PC-3 (cell line): ENCODE measurements at regions of chr11 and their contacts with region 1.

Region 1: GRCh38 chr11:130131961-130132850 is 27.4 kb upstream of the ST14 start:
- DNase-seq: peak; percentile 92
- ATAC-seq: peak; percentile 87
- H3K4me3 ChIP-seq: no peak overlapping the region
- H3K27ac ChIP-seq: no peak overlapping the region
- H3K4me1 ChIP-seq: no peaks in the 10 kb centered on the region
- H3K27me3 ChIP-seq: no peaks in the 10 kb centered on the region
- CTCF ChIP-seq: peak; percentile 95

Region 2: GRCh38 chr11:129785383-129786111 is 346.7 kb before region 1 on chr11:
- CTCF ChIA-PET with region 1: no interaction called
- POLR2A ChIA-PET with region 1: no interaction called
- intact Hi-C with region 1: loop called (anchors 2 kb)
- DNase-seq: peak; percentile 86
- ATAC-seq: peak; percentile 49
- H3K4me3 ChIP-seq: no peak overlapping the region
- H3K27ac ChIP-seq: peak overlapping the region; percentile 45
- H3K4me1 ChIP-seq: peaks cover 34% of the 10 kb centered on the region
- H3K27me3 ChIP-seq: no peaks in the 10 kb centered on the region
- CTCF ChIP-seq: peak; percentile 90

Region 3: DNA sequence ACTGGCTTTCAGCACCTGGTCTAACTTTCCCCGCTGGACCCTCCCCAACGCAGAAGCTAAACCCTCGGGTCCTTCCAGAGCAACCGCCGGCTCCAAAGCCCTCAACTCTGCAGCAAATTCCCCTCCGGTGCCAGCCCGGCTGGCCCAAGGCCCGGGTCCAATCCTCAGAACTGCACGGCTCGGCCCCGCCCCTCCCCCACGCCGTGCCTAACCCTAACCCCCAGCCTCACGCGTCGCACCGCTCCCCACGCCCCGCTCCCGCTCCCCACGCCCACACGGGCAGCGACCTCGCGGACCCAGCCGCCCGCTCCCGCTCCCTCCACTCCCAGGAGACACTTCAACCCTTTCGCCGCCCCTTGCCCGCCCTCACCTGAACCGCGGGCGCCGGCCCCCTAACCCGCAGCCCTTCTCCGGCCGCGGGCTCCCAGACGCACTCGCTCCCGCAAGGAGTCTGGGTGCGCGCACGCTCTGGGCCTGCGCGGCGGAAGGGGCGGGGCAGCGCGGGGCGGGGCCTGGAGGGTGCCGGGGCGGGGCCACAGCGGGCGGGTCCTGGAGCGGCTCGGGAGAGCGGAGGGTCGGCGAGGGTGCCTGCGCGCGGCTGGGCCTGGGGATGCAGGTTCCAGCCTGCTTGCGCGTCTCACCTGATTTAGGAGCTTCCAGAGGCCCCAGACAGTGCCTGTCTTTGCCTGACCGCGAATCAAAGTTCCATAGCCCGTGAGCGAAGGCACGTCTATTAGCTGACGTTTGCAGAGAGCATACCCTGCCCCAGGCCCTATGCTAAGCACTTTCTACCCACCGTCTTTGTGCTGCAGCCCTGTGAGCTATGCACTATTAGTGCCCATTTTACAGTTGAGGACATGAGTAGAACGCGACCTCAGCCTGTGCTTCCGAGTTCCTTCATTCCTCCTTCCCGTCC is 236.8 kb before region 1 on chr11 and contains the start of gene NFRKB:
- CTCF ChIA-PET with region 1: no interaction called
- POLR2A ChIA-PET with region 1: interaction called, 15 read pairs
- intact Hi-C with region 1: no loop called
- DNase-seq: peak; percentile 85
- ATAC-seq: peak; percentile 94
- H3K4me3 ChIP-seq: peak within 1 kb of the TSS; percentile 92
- H3K27ac ChIP-seq: peak within 1 kb of the TSS; percentile 21; the same call in 1 of the 2 replicates
- H3K4me1 ChIP-seq: peaks cover 20% of the 10 kb centered on the region
- H3K27me3 ChIP-seq: no peaks in the 10 kb centered on the region
- CTCF ChIP-seq: no peak
- total RNA-seq, gene NFRKB: 48.2 and 57.0 TPM in 2 replicates

Region 4: DNA sequence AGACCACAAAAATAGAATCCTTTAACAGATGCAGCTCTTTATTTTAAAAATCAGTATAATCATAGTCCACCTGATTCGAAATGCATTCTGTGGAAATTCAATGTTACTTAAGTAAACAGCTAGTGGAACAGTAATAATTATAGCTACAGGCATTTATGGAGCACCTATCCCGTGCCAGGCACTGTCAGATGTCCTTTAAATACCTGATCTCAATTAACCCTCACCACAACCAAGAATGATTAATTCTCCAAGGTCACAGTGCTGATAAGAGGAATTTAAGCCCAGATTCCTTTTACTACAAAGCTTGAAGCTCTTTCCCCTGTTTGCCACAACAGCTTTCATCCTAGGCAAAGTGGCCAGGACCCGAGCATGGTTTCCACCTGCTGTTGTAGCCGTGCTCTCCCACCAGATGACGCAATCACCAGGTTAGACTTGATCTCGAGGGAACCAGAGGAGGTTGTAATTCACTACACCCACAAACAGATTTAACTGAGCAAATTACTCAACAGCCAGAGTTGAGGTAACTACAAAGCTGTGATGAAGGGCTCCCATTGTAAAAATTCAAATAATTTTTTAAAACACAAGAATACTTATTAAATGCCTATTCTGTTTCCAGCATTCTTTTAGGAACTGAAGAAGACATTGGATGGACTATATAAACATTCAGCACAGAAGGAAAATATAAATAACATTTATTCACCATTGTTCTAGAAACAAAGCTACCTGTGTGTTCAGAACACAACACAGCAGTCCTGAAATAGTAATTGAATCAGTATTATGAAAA is 139.9 kb before region 1 on chr11:
- CTCF ChIA-PET with region 1: interaction called, 18 read pairs
- POLR2A ChIA-PET with region 1: no interaction called
- intact Hi-C with region 1: loop called (anchors 1 kb)
- DNase-seq: peak; percentile 53
- ATAC-seq: peak; percentile 68
- H3K4me3 ChIP-seq: no peak overlapping the region
- H3K27ac ChIP-seq: no peak overlapping the region
- H3K4me1 ChIP-seq: no peaks in the 10 kb centered on the region
- H3K27me3 ChIP-seq: no peaks in the 10 kb centered on the region
- CTCF ChIP-seq: peak; percentile 64

Region 5: DNA sequence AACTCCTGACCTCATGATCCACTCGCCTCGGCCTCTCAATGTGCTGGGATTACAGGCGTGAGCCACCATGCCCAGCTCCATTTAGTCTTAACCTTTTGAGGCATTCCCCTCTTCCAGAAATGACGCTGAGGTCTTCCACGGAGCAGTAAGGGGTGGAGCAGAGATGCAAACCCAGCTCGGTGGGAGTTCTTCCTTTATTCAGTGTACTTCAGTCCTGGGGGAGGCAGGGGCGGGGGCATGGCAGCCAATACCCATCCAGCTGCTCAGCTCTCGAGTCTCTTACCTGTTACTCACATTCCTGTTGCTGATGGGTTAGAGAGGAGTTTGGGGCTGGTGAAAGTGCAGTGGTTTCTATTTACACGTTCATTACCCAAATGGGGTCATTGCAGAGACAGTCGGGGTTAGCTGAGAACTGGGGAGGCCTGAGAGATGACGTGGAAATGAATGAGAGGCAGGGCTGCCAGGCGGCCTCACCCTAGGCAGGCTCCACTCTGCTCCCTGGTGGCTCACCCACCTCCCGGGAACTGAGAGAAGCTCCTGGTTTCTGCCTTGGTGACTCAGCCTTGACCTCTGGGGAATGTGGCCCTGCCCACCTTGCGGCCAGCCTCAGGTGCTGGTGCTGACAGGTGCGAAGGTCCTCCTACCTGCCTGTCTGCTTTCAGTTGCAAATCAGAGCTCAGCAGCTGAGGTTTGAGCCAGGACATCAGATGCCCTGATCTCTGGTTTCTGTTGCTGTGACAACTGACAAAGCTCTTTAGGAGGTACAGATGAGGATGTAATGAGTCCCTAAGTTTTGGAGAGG is 14.0 kb after region 1 on chr11:
- CTCF ChIA-PET with region 1: interaction called, 23 read pairs
- POLR2A ChIA-PET with region 1: interaction called, 3 read pairs
- intact Hi-C with region 1: no loop called
- DNase-seq: peak; percentile 99
- ATAC-seq: peak; percentile 97
- H3K4me3 ChIP-seq: no peak overlapping the region
- H3K27ac ChIP-seq: peak overlapping the region; percentile 89
- H3K4me1 ChIP-seq: peaks cover 34% of the 10 kb centered on the region
- H3K27me3 ChIP-seq: no peaks in the 10 kb centered on the region
- CTCF ChIP-seq: peak; percentile 77

Region 6: DNA sequence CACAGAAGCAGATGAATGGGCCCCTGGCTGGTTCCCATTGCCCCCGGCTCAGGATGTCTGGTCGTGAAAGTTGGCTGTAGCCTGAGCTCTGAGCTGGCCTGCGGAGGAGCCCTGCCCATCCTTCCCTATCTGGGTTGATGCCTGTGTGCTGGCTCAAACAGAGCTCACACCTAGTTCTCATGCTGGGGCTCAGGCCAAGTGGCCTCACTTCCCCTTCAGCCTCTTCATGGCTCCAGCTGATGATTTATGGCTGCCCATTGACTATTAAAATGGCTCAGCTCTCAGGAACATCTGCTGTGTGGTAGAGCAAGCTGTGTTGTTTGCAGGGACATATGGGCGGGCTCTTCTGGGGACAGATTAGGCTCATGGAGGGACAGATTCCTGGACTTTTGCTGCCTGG is 380.9 kb after region 1 on chr11:
- CTCF ChIA-PET with region 1: no interaction called
- POLR2A ChIA-PET with region 1: no interaction called
- intact Hi-C with region 1: no loop called
- DNase-seq: peak; percentile 38
- ATAC-seq: peak; percentile 43
- H3K4me3 ChIP-seq: no peak overlapping the region
- H3K27ac ChIP-seq: peak overlapping the region; percentile 95
- H3K4me1 ChIP-seq: peaks cover 42% of the 10 kb centered on the region
- H3K27me3 ChIP-seq: no peaks in the 10 kb centered on the region
- CTCF ChIP-seq: no peak